ENCODE measurements at regions of chr1 and their contacts with region 1.

Region 1: GRCh38 chr1:27725374-27726173 is at the start of gene FAM76A:
- DNase-seq: peak; percentile 99
- H3K4me3 Mint-ChIP-seq: peak within 1 kb of the TSS; percentile 86
- H3K27ac Mint-ChIP-seq: peak within 1 kb of the TSS; percentile 97
- H3K4me1 Mint-ChIP-seq: peaks cover 29% of the 10 kb centered on the region
- H3K27me3 Mint-ChIP-seq: no peaks in the 10 kb centered on the region
- total RNA-seq, gene FAM76A: 9.9 and 13.1 TPM in 2 replicates

Region 2: DNA sequence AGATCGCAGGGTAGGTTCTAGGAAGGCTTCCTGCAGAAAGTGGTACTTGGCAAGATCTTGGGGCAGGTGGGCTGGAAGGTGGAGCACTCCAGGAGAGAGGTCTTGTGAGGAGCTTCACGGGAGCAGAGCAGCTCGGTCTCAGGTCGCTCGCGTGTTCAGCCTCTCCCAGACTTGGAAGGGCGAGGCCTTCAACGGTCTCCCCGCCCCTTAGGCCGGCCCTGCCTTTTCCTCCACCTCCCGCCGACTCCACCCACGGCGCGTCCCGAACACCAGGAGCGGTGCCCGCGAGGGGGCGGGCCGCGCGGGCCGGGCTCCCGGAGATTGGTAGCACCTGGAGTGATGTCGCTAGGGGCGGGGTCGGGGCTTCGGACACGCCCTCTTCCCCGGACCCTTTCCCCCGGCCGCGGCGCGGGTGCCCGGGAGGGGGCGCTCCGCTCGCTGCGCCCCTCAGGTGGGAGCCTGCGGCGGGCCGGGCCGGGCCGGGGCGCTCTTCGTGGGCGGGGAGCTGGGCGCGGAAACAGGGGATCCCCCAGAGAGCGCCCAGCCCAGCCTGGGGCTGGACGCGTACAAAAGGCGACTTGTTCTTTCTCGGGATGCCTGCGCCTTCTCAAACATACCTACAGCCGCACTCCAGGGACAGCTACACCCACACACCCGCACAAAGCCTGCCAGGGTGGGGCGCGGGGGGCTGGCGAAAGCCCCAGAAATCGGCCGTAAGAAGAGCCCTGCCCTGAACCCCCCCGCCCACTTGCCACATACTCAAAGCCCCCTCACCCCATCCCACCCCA is 157.1 kb before region 1 on chr1:
- intact Hi-C with region 1: loop called (anchors 2 kb)
- DNase-seq: peak; percentile 94
- H3K4me3 Mint-ChIP-seq: peak overlapping the region; percentile 67
- H3K27ac Mint-ChIP-seq: no peak overlapping the region
- H3K4me1 Mint-ChIP-seq: peaks cover 18% of the 10 kb centered on the region
- H3K27me3 Mint-ChIP-seq: no peaks in the 10 kb centered on the region

Region 3: DNA sequence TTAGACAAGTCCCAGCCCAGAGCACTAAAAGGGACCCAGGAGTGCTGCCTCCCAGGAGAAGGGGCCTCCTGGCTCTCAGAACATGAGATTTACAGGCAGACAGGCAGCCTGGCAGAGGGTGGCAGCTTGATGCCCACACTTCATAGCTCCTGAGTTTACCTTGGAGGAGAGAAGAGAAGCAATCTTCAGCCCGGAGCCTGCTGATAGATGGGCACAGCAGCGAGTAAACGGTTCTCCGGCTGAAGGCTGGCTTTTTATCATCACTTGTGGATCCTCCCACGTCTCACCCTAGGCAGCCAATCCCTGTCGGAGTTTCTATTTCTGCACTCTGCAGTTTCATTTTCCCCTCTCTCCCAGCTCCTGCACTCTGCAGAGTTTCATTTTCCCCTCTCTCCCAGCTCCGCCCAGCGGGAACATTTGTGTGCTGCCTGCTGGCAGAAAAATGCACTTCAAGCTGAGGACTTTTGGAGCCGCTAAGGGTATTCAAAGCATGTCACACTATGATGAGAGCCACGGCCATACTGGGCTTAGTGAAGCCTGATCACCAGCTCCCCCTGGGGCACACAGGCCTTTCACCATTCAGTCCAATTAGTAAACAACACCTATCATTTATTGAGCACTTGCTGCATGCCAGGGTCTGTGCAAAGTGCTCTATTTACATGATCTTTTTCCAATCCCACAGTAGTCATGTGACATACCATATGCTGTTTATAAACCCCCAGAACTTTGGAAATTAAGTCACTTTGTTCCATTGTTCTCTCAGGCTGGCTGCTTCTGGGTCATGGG is 53.4 kb before region 1 on chr1 and contains the start of gene IFI6:
- intact Hi-C with region 1: loop called (anchors 1 kb)
- DNase-seq: peak; percentile 84
- H3K4me3 Mint-ChIP-seq: peak within 1 kb of the TSS; percentile 94
- H3K27ac Mint-ChIP-seq: peak within 1 kb of the TSS; percentile 90
- H3K4me1 Mint-ChIP-seq: peaks cover 40% of the 10 kb centered on the region
- H3K27me3 Mint-ChIP-seq: no peaks in the 10 kb centered on the region
- total RNA-seq, gene IFI6: 71.7 and 85.6 TPM in 2 replicates

Region 4: DNA sequence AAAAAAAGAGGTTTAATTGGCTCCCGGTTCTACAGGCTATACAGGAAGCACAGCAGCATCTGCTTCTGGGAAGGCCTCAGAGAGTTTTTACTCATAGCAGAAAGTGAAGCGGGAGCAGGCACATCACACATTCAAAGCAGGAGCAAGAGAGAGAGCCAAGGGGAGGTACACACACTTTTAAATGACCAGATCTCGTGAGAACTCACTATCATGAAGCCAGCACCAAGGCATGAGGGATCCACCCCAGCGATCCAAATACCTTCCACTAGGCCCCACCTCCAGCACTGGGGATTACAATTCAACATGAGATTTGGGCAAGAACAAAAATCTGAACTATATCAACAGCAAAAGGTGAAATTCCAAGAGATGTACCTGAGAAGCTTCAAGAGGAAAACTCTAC is 20.6 kb before region 1 on chr1:
- intact Hi-C with region 1: no loop called
- DNase-seq: no peak
- H3K4me3 Mint-ChIP-seq: no peak overlapping the region
- H3K27ac Mint-ChIP-seq: no peak overlapping the region
- H3K4me1 Mint-ChIP-seq: no peaks in the 10 kb centered on the region
- H3K27me3 Mint-ChIP-seq: no peaks in the 10 kb centered on the region

Region 5: GRCh38 chr1:27816921-27817630 is 91.5 kb after region 1 on chr1:
- intact Hi-C with region 1: no loop called
- DNase-seq: no peak
- H3K4me3 Mint-ChIP-seq: no peak overlapping the region
- H3K27ac Mint-ChIP-seq: no peak overlapping the region
- H3K4me1 Mint-ChIP-seq: no peaks in the 10 kb centered on the region
- H3K27me3 Mint-ChIP-seq: no peaks in the 10 kb centered on the region

Region 6: GRCh38 chr1:27830621-27831424 is 105.2 kb after region 1 on chr1 and contains the start of gene PPP1R8:
- intact Hi-C with region 1: loop called (anchors 1 kb)
- DNase-seq: peak; percentile 86
- H3K4me3 Mint-ChIP-seq: peak within 1 kb of the TSS; percentile 93
- H3K27ac Mint-ChIP-seq: peak within 1 kb of the TSS; percentile 84
- H3K4me1 Mint-ChIP-seq: peaks cover 17% of the 10 kb centered on the region
- H3K27me3 Mint-ChIP-seq: no peaks in the 10 kb centered on the region
- total RNA-seq, gene PPP1R8: 84.1 and 88.1 TPM in 2 replicates

Region 7: GRCh38 chr1:27858072-27858958 is 132.7 kb after region 1 on chr1:
- intact Hi-C with region 1: no loop called
- DNase-seq: peak; percentile 72
- H3K4me3 Mint-ChIP-seq: no peak overlapping the region
- H3K27ac Mint-ChIP-seq: no peak overlapping the region
- H3K4me1 Mint-ChIP-seq: peaks cover 27% of the 10 kb centered on the region
- H3K27me3 Mint-ChIP-seq: no peaks in the 10 kb centered on the region

Measured in activated T-helper 1 cell treated with anti-CD3 and anti-CD28 coated beads, Interleukin-12 subunit alpha, Interleukin-12 subunit beta, Interleukin-2, Interleukin-4 antibody, amounts not matched to agents 30 ng/mL and 10 ng/mL and 1 ng/mL, durations not matched to agents 14 hours and 24 hours and 36 hours (primary cell).